ENCODE measurements at regions of chr1 and their contacts with region 1.

Region 1: DNA sequence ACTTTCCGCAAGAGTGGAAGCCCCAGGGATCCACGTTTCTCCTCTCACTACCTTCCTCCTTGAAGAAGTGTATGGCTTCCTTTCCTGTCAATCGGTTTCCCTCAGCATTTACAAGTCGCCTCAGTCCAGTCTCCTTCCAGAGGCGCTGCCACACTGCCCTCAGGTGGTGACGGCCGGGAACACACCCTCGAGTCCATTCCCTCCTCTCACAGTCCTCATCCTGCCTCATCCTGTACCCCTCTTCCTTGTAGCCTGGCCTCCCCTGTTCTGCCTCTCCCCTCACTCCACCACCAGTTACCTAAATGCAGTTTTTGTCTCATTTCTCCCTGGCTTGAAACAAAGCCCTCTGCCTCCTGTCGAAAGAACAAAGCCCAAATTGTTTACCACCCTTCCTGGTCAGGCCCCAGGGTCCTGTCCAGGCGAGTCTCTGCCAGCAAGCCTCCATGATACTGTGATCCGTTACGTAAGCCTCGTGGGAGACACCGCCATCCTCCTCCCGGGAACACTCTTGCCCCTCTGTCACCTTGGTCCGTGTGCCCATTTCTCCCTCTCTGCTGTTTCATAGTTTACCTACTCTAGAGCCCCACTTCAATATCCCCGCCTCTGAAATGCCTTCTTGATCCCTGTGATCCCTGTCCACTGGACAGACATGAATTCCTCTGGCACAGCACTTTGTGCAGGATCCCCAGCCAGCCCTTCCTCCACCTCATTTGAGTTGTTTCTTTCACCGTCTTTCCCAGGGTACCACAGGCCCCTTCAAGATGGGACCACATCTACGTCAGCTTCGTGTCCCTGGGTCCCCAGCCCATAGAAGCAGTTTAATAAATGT is 23.3 kb upstream of the LSM10 start:
- DNase-seq: peak; percentile 90
- H3K4me3 ChIP-seq: no peak overlapping the region
- H3K27ac ChIP-seq: no peak overlapping the region
- H3K4me1 ChIP-seq: peaks cover 3% of the 10 kb centered on the region
- H3K27me3 ChIP-seq: no peaks in the 10 kb centered on the region
- CTCF ChIP-seq: peak; percentile 96 to 97
- POLR2A ChIP-seq: no peak

Region 2: GRCh38 chr1:36285448-36286101 is 135.5 kb before region 1 on chr1:
- CTCF ChIA-PET with region 1: interaction called, 11 read pairs
- POLR2A ChIA-PET with region 1: no interaction called
- dilution Hi-C with region 1: no loop called
- intact Hi-C with region 1: no loop called
- DNase-seq: peak; percentile 79
- H3K4me3 ChIP-seq: no peak overlapping the region
- H3K27ac ChIP-seq: no peak overlapping the region
- H3K4me1 ChIP-seq: no peaks in the 10 kb centered on the region
- H3K27me3 ChIP-seq: no peaks in the 10 kb centered on the region
- CTCF ChIP-seq: peak; percentile 57 to 59
- POLR2A ChIP-seq: no peak

Region 3: GRCh38 chr1:36306902-36307456 is 114.1 kb before region 1 on chr1:
- CTCF ChIA-PET with region 1: no interaction called
- POLR2A ChIA-PET with region 1: no interaction called
- dilution Hi-C with region 1: no loop called
- intact Hi-C with region 1: loop called (anchors 2 kb)
- DNase-seq: peak; percentile 97
- H3K4me3 ChIP-seq: peak overlapping the region; percentile 43 to 52 (median 52)
- H3K27ac ChIP-seq: peak overlapping the region; percentile 16
- H3K4me1 ChIP-seq: peaks cover 15% of the 10 kb centered on the region
- H3K27me3 ChIP-seq: no peaks in the 10 kb centered on the region
- CTCF ChIP-seq: no peak
- POLR2A ChIP-seq: peak; percentile 95

Region 4: DNA sequence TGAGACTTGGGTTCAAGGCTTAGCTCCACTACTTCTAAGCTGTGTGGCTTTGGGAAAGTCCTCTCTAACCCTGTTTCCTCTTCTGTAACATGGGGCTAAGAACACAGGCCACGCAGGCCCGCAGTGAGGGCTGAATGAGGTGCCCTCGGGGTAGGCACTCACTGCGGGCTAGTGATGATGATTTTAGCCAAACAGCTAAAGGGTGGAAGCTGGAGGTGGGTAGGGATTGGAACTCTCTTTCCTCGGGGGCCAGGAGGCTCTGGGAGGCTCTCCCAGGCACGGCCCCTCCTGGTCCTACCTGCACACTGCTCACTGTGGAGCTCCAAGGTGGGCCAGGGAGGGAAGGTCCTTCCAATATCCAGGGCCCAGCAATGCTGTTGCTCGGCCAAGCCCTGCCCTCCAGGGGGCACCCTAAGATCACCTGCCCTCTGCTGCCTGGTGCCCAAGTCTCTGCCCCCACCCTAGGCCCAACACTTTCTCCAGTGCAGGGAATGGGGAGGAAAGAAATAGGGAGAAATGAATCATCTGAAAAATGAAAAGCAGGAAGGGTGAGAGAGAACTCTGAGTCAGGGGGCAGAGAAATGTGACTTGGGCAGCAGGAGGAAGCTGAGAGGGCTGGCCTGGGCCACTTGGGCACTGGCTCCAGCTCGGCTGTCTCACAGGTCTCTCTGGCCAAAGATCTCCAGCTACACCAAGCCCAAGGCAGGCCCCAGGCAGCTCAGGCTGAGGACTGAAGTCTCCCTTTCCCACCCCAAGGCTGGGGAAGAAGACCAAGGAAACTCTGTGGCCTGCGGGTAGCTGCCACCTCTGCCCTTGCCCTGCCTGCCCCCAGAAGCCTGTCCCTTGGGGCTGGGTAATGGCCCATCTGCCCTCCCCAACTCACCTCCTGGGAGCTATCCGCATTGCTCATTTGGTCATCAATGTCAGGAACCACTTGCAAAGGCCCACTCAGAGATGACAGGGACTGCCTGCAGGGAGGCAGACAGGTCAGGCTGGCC is 78.3 kb before region 1 on chr1:
- CTCF ChIA-PET with region 1: interaction called, 83 read pairs
- POLR2A ChIA-PET with region 1: no interaction called
- dilution Hi-C with region 1: no loop called
- intact Hi-C with region 1: loop called (anchors 1 kb)
- DNase-seq: peak; percentile 95
- H3K4me3 ChIP-seq: no peak overlapping the region
- H3K27ac ChIP-seq: peak overlapping the region; percentile 85
- H3K4me1 ChIP-seq: peaks cover 28% of the 10 kb centered on the region
- H3K27me3 ChIP-seq: no peaks in the 10 kb centered on the region
- CTCF ChIP-seq: peak; percentile 88 to 89
- POLR2A ChIP-seq: peak; percentile 49

Region 5: GRCh38 chr1:36369061-36369861 is 51.8 kb before region 1 on chr1:
- CTCF ChIA-PET with region 1: interaction called, 6 read pairs
- POLR2A ChIA-PET with region 1: interaction called, 5 read pairs
- dilution Hi-C with region 1: no loop called
- intact Hi-C with region 1: loop called (anchors 1 kb)
- DNase-seq: peak; percentile 77
- H3K4me3 ChIP-seq: no peak overlapping the region
- H3K27ac ChIP-seq: peak overlapping the region; percentile 54
- H3K4me1 ChIP-seq: peaks cover 47% of the 10 kb centered on the region
- H3K27me3 ChIP-seq: no peaks in the 10 kb centered on the region
- CTCF ChIP-seq: peak; percentile 89 to 91
- POLR2A ChIP-seq: no peak

Region 6: DNA sequence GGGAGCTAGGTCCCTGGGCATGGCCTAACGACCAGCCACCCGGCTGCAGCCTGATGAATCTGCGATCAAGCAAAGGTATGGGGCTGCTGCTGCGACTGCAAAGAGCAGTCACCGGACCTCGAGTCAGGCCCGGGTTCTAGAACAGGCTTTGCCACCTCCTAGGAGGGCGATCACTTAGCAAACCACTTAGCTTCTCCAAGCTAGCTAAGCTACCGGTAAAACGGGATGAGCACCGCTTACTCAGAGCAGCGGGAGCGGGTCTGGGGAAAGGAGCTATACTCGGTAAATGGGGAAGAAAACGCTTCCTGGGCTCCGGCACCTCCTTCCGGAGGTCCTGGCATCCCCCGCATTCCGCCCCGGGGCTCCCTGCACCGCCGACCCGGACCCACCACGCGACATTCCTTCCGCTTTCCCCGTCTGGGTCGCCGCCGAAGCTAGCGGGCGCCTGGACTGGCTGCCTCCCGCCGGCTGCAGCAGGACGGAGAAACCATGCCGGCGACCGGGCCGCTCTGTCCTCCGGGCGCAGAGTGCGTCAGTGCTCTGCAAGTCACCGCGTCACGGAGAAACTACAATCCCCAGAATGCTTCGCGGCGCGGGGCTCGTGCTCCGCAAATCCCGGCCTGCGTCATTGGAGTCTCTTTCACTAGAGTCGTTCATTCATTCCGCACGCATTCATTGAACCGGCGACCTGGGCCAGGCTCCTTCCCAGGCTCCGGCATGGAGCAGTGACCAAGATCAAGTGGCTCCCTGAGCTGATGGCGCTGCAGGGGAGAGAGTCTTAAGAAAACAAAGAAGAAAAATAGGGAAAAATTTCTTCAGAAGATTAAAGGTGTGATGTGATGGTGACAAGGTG is 23.4 kb before region 1 on chr1 and contains the start of gene LSM10:
- CTCF ChIA-PET with region 1: interaction called, 6 read pairs
- POLR2A ChIA-PET with region 1: no interaction called
- dilution Hi-C with region 1: no loop called
- intact Hi-C with region 1: loop called (anchors 2 kb)
- DNase-seq: peak; percentile 96
- H3K4me3 ChIP-seq: peak within 1 kb of the TSS; percentile 63 to 78 (median 69)
- H3K27ac ChIP-seq: peak within 1 kb of the TSS; percentile 61
- H3K4me1 ChIP-seq: peaks cover 3% of the 10 kb centered on the region
- H3K27me3 ChIP-seq: no peaks in the 10 kb centered on the region
- CTCF ChIP-seq: no peak
- POLR2A ChIP-seq: peak; percentile 91
- total RNA-seq, gene LSM10: 38.2 and 40.3 TPM in 2 replicates

Region 7: GRCh38 chr1:36471830-36472641 is 51.0 kb after region 1 on chr1:
- CTCF ChIA-PET with region 1: no interaction called
- POLR2A ChIA-PET with region 1: no interaction called
- dilution Hi-C with region 1: no loop called
- intact Hi-C with region 1: no loop called
- DNase-seq: no peak
- H3K4me3 ChIP-seq: no peak overlapping the region
- H3K27ac ChIP-seq: no peak overlapping the region
- H3K4me1 ChIP-seq: no peaks in the 10 kb centered on the region
- H3K27me3 ChIP-seq: no peaks in the 10 kb centered on the region
- CTCF ChIP-seq: no peak
- POLR2A ChIP-seq: no peak

Measured in endothelial cell of umbilical vein (primary cell).